ENCODE measurements at regions of chr16 and their contacts with region 1.

Region 1: GRCh38 chr16:23842137-23842600 is 6.4 kb downstream of the PRKCB start:
- DNase-seq: no peak
- ATAC-seq: no peak
- H3K4me3 ChIP-seq: no peak overlapping the region
- H3K4me1 ChIP-seq: no peaks in the 10 kb centered on the region
- CTCF ChIP-seq: no peak

Region 2: GRCh38 chr16:23905027-23905426 is 62.9 kb after region 1 on chr16:
- intact Hi-C with region 1: loop called in 1 of 2 experiments (anchors 10 kb)
- DNase-seq: no peak
- ATAC-seq: no peak
- H3K4me3 ChIP-seq: no peak overlapping the region
- H3K4me1 ChIP-seq: no peaks in the 10 kb centered on the region
- CTCF ChIP-seq: no peak